Activated CD8-positive, alpha-beta T cell treated with anti-CD3 and anti-CD28 coated beads for 36 hours (primary cell): ENCODE measurements at regions of chr6 and their contacts with region 1.

Region 1: GRCh38 chr6:291697-292505 is at the start of gene DUSP22:
- DNase-seq: peak; percentile 92
- ATAC-seq: peak; percentile 71
- H3K4me3 Mint-ChIP-seq: peak within 1 kb of the TSS; percentile 95
- H3K27ac Mint-ChIP-seq: peak within 1 kb of the TSS; percentile 97
- H3K4me1 Mint-ChIP-seq: peaks cover 58% of the 10 kb centered on the region
- H3K27me3 Mint-ChIP-seq: no peaks in the 10 kb centered on the region
- CTCF ChIP-seq: no peak
- total RNA-seq, gene DUSP22: 32.5 to 34.2 TPM

Region 2: DNA sequence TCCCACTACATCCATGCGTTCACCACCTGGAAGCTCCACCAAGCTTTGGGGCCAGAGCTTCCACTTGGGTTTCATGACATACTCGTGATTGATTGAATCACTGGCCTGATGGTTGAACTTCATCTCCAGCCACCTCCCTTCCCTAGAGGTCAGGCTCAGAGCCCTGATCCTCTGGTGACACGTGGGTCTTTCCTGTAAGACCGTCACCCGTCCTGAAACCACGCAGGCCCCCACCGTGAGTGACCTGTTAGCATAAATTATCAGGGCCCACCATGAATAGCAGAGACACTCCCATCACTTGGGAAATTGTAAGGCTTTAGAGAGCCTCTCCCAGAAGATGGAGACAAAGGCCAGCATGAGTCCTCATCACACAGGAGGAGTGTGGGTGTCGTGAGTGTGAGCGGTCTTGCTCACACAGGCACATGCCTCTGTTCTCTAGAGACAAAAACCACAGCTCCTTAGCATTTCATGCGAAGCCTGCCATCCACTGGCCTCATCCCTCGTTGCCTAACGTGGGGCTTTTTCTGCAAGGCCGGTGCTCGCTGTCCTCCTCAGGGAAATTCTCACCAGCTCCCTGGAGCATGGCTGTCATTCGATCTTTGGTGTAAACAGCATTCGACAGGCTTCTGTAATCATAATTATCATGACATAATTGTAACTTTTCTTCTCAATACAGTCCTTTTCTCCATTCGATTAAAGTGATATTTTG is 64.7 kb before region 1 on chr6:
- CTCF ChIA-PET with region 1: interaction called, 3 read pairs
- POLR2A ChIA-PET with region 1: interaction called, 7 read pairs
- intact Hi-C with region 1: loop called (anchors 5 kb)
- DNase-seq: peak; percentile 61
- ATAC-seq: no peak
- H3K4me3 Mint-ChIP-seq: no peak overlapping the region
- H3K27ac Mint-ChIP-seq: peak overlapping the region; percentile 4
- H3K4me1 Mint-ChIP-seq: peaks cover 74% of the 10 kb centered on the region
- H3K27me3 Mint-ChIP-seq: peaks cover 1% of the 10 kb centered on the region
- CTCF ChIP-seq: no peak

Region 3: GRCh38 chr6:246352-246751 is 45.5 kb before region 1 on chr6:
- CTCF ChIA-PET with region 1: no interaction called
- POLR2A ChIA-PET with region 1: no interaction called
- intact Hi-C with region 1: no loop called
- DNase-seq: no peak
- ATAC-seq: no peak
- H3K4me3 Mint-ChIP-seq: no peak overlapping the region
- H3K27ac Mint-ChIP-seq: no peak overlapping the region
- H3K4me1 Mint-ChIP-seq: peaks cover 7% of the 10 kb centered on the region
- H3K27me3 Mint-ChIP-seq: no peaks in the 10 kb centered on the region
- CTCF ChIP-seq: no peak

Region 4: GRCh38 chr6:336159-337019 is 44.5 kb after region 1 on chr6:
- CTCF ChIA-PET with region 1: interaction called, 5 read pairs
- POLR2A ChIA-PET with region 1: interaction called, 8 read pairs
- intact Hi-C with region 1: loop called (anchors 1 kb)
- DNase-seq: peak; percentile 28
- ATAC-seq: peak; percentile 8
- H3K4me3 Mint-ChIP-seq: peak overlapping the region; percentile 9
- H3K27ac Mint-ChIP-seq: peak overlapping the region; percentile 90
- H3K4me1 Mint-ChIP-seq: peaks cover 58% of the 10 kb centered on the region
- H3K27me3 Mint-ChIP-seq: no peaks in the 10 kb centered on the region
- CTCF ChIP-seq: no peak